Sciatic nerve (tissue), 2 donors: ENCODE measurements at regions of chr9 and their contacts with region 1.

Region 1: DNA sequence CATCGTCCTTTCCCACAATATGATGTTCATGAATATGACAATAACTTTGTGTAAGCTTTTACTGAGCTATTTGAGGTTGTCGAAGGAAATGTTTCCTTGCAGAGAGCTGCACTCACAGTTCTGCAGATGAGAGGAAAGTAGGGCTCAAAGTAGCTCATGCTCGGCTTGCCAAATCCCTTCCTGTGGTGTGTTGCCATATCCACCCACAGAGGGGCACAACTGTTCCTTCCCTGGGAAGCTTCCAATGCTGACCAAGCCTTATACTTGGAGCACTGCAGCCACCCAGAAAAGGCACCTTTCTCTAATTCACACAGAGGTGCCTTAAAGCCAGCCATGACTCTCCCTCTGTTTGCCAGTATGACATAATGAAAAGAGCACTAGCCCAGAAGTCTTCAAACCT is 390.3 kb downstream of the CAAP1 start:
- DNase-seq: no peak
- ATAC-seq: no peak

Region 2: DNA sequence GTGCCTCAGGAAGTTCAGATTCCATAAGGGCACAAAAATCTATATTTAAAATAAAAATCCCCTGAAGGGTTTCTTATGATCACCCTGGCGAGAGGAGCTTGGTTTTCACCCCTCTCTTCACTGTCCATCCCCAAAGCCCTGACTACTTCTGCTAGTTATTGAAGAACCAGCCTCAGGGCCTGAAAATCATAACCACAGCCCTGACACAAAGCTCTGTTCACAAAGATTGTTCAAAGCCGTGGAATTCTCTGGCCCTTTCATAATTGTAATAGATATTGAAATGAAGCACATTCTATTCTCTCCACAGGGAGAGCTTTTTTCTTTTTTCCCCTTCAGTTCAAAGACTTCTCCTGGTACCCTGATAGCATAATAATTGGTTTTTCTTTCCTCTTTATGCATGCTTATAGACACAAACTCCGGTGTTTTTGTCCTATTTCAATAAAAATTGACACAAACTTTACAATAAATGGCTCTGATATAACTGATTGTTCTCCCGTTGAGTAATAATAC is 46.5 kb after region 1 on chr9:
- intact Hi-C with region 1: loop called (anchors 2 kb)
- DNase-seq: no peak
- ATAC-seq: no peak